ENCODE measurements at regions of chr15 and their contacts with region 1.

Region 1: GRCh38 chr15:31296646-31297574 is 29.7 kb upstream of the KLF13 start:
- DNase-seq: peak in 2 of 9 experiments; percentile 3 to 41
- ATAC-seq: no peak
- H3K4me3 ChIP-seq: no peak overlapping the region
- H3K4me3 Mint-ChIP-seq: no peak overlapping the region
- H3K27ac ChIP-seq: no peak overlapping the region
- H3K27ac Mint-ChIP-seq: no peak overlapping the region
- H3K4me1 ChIP-seq: no peaks in the 10 kb centered on the region
- H3K4me1 Mint-ChIP-seq: no peaks in the 10 kb centered on the region
- H3K27me3 ChIP-seq: no peaks in the 10 kb centered on the region
- H3K27me3 Mint-ChIP-seq: peaks cover 3% of the 10 kb centered on the region
- CTCF ChIP-seq: no peak

Region 2: DNA sequence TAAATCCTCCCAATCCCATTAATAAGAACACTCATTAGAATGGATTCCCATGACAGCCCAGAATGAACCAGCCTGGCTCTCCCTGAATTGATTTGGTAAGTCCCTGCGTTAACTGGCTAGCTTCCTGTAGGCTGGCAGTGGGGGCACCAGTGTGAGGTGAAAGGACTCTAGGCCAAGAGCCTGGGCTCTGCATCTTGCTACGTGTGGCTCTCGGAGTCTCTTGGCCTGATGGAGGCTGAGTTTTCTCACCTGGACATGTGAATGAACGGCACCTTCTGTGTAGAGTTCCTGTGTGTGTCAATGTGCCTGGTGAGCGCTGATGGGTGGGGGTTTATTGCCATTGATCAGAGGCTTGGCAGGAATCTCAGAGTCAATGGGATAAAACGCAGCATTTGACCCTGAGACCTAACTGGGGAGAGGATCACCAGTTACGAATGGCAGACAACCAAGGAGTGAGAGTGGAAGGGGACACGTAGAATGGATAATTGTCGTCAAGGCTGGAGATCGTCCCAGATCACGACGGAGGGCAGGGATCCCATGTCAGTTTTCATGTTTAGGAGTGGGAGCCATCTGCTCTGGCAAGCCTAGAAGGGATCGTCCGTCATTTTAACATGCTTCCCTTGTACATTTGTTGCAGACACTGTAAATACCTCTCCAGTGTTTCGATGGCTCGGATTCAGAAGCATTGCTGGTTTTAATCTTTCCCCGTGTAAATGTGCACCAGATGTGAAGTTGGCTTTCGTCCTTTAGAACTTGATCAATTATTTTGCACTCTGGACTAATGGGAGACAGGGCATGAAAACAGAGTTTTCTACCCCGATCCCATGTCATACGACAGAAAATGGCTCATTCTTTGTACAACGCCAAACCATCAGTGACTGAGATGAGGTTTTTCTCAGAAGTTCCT is 20.8 kb after region 1 on chr15:
- CTCF ChIA-PET with region 1: interaction called, 3 read pairs
- POLR2A ChIA-PET with region 1: no interaction called
- intact Hi-C with region 1: loop called in 1 of 2 experiments (anchors 1 kb)
- DNase-seq: no peak
- ATAC-seq: no peak
- H3K4me3 ChIP-seq: no peak overlapping the region
- H3K4me3 Mint-ChIP-seq: no peak overlapping the region
- H3K27ac ChIP-seq: no peak overlapping the region
- H3K27ac Mint-ChIP-seq: no peak overlapping the region
- H3K4me1 ChIP-seq: peaks cover 23% of the 10 kb centered on the region
- H3K4me1 Mint-ChIP-seq: peaks cover 39% of the 10 kb centered on the region
- H3K27me3 ChIP-seq: no peaks in the 10 kb centered on the region
- H3K27me3 Mint-ChIP-seq: no peaks in the 10 kb centered on the region
- CTCF ChIP-seq: no peak

Region 3: GRCh38 chr15:31352911-31353811 is 56.3 kb after region 1 on chr15:
- CTCF ChIA-PET with region 1: no interaction called
- POLR2A ChIA-PET with region 1: no interaction called
- intact Hi-C with region 1: no loop called
- DNase-seq: peak in 6 of 9 experiments; percentile 56 to 88 (median 71)
- ATAC-seq: peak; percentile 61
- H3K4me3 ChIP-seq: peak overlapping the region; percentile 19 to 33
- H3K4me3 Mint-ChIP-seq: peak overlapping the region; percentile 79
- H3K27ac ChIP-seq: peak overlapping the region; percentile 58 to 78
- H3K27ac Mint-ChIP-seq: peak overlapping the region; percentile 97
- H3K4me1 ChIP-seq: peaks cover 100% of the 10 kb centered on the region
- H3K4me1 Mint-ChIP-seq: peaks cover 98% of the 10 kb centered on the region
- H3K27me3 ChIP-seq: no peaks in the 10 kb centered on the region
- H3K27me3 Mint-ChIP-seq: no peaks in the 10 kb centered on the region
- CTCF ChIP-seq: no peak